ENCODE measurements at regions of chr3 and their contacts with region 1.

Region 1: DNA sequence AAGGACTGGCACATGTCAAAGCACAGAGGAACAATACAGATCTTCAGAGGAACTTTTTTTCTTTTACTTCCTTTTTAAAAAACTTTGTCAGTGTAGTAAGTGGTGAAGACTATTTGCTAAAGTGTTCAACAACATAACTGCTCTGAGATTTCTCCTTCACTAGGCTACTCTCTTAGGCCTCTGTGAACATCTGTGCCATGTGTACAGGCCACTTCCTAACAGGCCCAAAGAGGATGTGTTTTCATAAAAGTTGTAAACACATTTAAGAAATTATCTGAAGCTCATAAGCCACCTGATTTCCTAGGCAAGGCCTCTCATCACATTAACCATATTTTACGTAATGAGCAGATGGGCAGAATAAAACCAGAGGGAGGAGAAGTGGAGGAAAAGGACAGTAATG is 235.4 kb downstream of the FHIT start:
- DNase-seq: no peak
- H3K4me3 ChIP-seq: no peak overlapping the region
- H3K27ac ChIP-seq: no peak overlapping the region
- H3K4me1 ChIP-seq: no peaks in the 10 kb centered on the region
- H3K27me3 ChIP-seq: no peaks in the 10 kb centered on the region
- CTCF ChIP-seq: no peak
- POLR2A ChIP-seq: no peak

Region 2: DNA sequence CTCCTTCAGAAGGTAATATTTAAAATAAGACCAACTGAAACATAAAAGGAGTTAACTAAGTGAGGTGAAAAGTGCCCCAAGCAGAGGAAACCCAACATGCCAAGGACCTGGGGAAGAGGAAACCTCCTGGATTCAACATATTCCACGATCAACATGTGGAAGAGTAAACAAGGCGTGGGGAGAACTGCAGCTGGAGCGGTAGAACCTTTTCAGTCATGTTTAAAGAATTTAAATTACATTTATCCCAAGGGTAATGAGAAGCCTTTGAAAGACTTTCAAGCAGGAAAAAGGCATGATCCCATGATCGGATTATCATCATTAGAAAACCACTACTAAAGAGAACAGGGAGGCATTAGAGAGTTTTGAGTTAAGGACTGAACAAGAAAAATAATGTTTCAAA is 95.3 kb before region 1 on chr3:
- intact Hi-C with region 1: loop called (anchors 10 kb)
- DNase-seq: no peak
- H3K4me3 ChIP-seq: no peak overlapping the region
- H3K27ac ChIP-seq: no peak overlapping the region
- H3K4me1 ChIP-seq: no peaks in the 10 kb centered on the region
- H3K27me3 ChIP-seq: no peaks in the 10 kb centered on the region
- CTCF ChIP-seq: no peak
- POLR2A ChIP-seq: no peak

Measured in breast epithelium (tissue), 4 donors.